Caco-2 (cell line): ENCODE measurements at regions of chr11 and their contacts with region 1.

Region 1: GRCh38 chr11:121023848-121024751 is at the start of gene TBCEL:
- DNase-seq: peak; percentile 95 to 96
- H3K4me3 ChIP-seq: peak within 1 kb of the TSS; percentile 98
- H3K4me3 Mint-ChIP-seq: peak within 1 kb of the TSS; percentile 73
- H3K27ac Mint-ChIP-seq: peak within 1 kb of the TSS; percentile 77
- H3K4me1 ChIP-seq: peaks cover 4% of the 10 kb centered on the region; the same call in 1 of the 2 replicates
- H3K4me1 Mint-ChIP-seq: peaks cover 19% of the 10 kb centered on the region
- H3K27me3 ChIP-seq: no peaks in the 10 kb centered on the region
- H3K27me3 Mint-ChIP-seq: peaks cover 3% of the 10 kb centered on the region
- CTCF ChIP-seq: no peak
- total RNA-seq, gene TBCEL: 23.6 and 24.3 TPM in 2 replicates

Region 2: DNA sequence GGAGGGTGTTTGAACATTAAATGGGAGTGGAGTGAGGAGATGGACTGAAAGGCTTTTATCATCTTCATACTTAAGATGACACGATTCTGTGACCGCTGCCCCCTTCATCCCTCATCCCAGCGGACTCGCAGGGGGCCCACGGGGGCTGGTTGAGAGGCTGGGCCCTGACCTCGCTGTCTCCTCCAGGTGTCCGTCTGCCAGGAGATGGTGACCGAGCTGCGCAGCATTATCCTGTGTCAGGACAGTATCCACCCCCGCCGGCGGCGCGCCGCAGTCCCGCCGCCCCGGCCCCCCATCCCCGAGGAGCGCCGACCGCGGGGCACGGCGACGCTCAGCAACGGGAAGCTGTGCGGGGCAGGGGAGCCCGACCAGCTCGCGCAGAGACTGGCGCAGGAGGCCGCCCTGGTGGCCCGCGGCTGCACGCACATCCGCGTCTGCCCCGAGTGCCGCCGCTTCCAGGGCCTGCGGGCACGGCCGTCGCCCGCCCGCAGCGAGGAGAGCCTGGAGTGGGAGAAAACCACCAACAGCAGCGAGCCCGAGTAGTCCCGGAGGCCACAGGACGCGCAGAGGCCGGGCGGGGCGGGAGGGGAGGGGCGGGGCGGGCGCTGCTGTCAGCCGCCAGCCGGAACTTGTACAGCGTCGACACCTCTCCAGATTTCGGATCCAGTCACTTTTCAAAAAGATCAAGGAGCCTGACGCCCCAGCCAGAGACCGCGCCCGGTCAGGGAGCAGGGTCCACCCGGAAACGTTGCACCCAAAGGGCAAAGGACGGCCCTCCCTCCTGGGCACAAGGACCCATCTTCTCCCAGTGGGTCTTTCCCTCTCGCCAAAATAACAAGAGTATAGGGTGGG is 38.2 kb before region 1 on chr11:
- CTCF ChIA-PET with region 1: no interaction called
- POLR2A ChIA-PET with region 1: interaction called, 3 read pairs
- intact Hi-C with region 1: loop called (anchors 2 kb)
- DNase-seq: peak; percentile 72 to 79
- H3K4me3 ChIP-seq: peak overlapping the region; percentile 38
- H3K4me3 Mint-ChIP-seq: peak overlapping the region; percentile 73
- H3K27ac Mint-ChIP-seq: no peak overlapping the region
- H3K4me1 ChIP-seq: no peaks in the 10 kb centered on the region
- H3K4me1 Mint-ChIP-seq: peaks cover 5% of the 10 kb centered on the region
- H3K27me3 ChIP-seq: no peaks in the 10 kb centered on the region; the same call in 1 of the 2 replicates
- H3K27me3 Mint-ChIP-seq: peaks cover 34% of the 10 kb centered on the region
- CTCF ChIP-seq: peak; percentile 42 to 61